Activated T-helper 1 cell treated with anti-CD3 and anti-CD28 coated beads, Interleukin-12 subunit alpha, Interleukin-12 subunit beta, Interleukin-2, Interleukin-4 antibody, amounts not matched to agents 30 ng/mL and 10 ng/mL and 1 ng/mL, durations not matched to agents 14 hours and 24 hours and 36 hours (primary cell): ENCODE measurements at regions of chr13 and their contacts with region 1.

Region 1: GRCh38 chr13:40102856-40103255 is 447.4 kb downstream of the COG6 start:
- DNase-seq: peak; percentile 51
- H3K4me3 Mint-ChIP-seq: peak overlapping the region; percentile 74
- H3K27ac Mint-ChIP-seq: peak overlapping the region; percentile 97
- H3K4me1 Mint-ChIP-seq: peaks cover 64% of the 10 kb centered on the region
- H3K27me3 Mint-ChIP-seq: no peaks in the 10 kb centered on the region

Region 2: GRCh38 chr13:39684531-39685137 is 418.2 kb before region 1 on chr13:
- intact Hi-C with region 1: loop called (anchors 10 kb)
- DNase-seq: no peak
- H3K4me3 Mint-ChIP-seq: no peak overlapping the region
- H3K27ac Mint-ChIP-seq: no peak overlapping the region
- H3K4me1 Mint-ChIP-seq: peaks cover 25% of the 10 kb centered on the region
- H3K27me3 Mint-ChIP-seq: no peaks in the 10 kb centered on the region

Region 3: DNA sequence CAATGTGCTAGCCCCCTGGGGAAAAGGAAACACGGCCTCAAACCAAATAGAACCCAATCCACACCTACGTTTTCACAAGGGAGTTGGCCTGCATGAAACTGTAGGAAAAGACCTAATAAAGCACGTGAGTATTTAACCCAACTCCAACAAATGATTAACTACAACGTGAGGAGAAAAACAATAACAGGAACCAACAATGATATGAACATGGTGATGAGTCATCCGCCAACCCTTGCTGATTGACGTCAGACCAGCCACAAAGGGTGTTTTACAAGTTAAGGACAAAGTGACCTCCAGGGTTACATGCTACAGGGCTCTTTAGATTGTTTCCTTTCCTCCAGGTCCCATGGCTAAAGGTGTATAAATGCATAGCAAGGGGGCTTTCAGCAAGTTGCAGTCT is 13.2 kb after region 1 on chr13:
- intact Hi-C with region 1: loop called (anchors 1 kb)
- DNase-seq: peak; percentile 51
- H3K4me3 Mint-ChIP-seq: peak overlapping the region; percentile 24
- H3K27ac Mint-ChIP-seq: peak overlapping the region; percentile 91
- H3K4me1 Mint-ChIP-seq: peaks cover 43% of the 10 kb centered on the region
- H3K27me3 Mint-ChIP-seq: no peaks in the 10 kb centered on the region

Region 4: GRCh38 chr13:40170982-40171381 is 68.1 kb after region 1 on chr13:
- intact Hi-C with region 1: loop called (anchors 2 kb)
- DNase-seq: no peak
- H3K4me3 Mint-ChIP-seq: no peak overlapping the region
- H3K27ac Mint-ChIP-seq: no peak overlapping the region
- H3K4me1 Mint-ChIP-seq: peaks cover 31% of the 10 kb centered on the region
- H3K27me3 Mint-ChIP-seq: peaks cover 2% of the 10 kb centered on the region

Region 5: DNA sequence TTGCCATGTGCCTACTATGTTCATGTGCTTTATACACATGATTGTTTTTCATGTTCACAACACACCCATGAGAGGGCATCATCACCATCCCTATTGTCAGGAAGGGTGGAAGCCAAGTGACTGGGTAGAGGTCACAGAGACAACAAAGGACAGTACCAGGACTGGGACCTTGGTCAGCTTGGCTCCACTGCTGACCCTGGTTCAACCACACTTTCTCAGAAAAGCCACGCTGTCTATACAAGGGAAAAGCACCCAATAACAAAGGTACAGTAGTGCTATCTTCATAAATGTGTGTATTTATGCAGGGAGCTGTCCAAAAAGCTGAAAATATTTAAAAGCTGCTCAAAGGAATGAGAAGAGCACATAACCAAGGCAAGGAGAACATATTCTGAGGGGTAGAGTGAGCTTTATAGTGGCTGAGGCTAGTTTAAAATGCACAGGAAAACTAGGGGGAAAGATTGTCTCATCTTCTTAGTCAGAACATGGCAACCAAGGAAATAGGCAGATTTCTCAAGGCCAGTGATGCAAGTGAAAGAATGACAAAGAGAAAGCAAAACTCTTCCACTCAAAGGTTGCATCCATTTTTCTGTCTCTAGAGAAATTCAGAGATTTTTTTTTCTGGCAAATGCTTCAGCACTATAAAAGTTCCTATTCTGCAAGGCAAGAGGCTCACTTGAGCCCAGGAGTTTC is 148.6 kb after region 1 on chr13:
- intact Hi-C with region 1: loop called (anchors 2 kb)
- DNase-seq: peak; percentile 4
- H3K4me3 Mint-ChIP-seq: no peak overlapping the region
- H3K27ac Mint-ChIP-seq: peak overlapping the region; percentile 78
- H3K4me1 Mint-ChIP-seq: peaks cover 39% of the 10 kb centered on the region
- H3K27me3 Mint-ChIP-seq: no peaks in the 10 kb centered on the region

Region 6: GRCh38 chr13:40764587-40765403 is 661.9 kb after region 1 on chr13:
- intact Hi-C with region 1: loop called (anchors 2 kb)
- DNase-seq: no peak
- H3K4me3 Mint-ChIP-seq: peak overlapping the region; percentile 23
- H3K27ac Mint-ChIP-seq: peak overlapping the region; percentile 88
- H3K4me1 Mint-ChIP-seq: peaks cover 39% of the 10 kb centered on the region
- H3K27me3 Mint-ChIP-seq: no peaks in the 10 kb centered on the region